Motor neuron (in vitro differentiated cells): ENCODE measurements at regions of chr2 and their contacts with region 1.

Region 1: DNA sequence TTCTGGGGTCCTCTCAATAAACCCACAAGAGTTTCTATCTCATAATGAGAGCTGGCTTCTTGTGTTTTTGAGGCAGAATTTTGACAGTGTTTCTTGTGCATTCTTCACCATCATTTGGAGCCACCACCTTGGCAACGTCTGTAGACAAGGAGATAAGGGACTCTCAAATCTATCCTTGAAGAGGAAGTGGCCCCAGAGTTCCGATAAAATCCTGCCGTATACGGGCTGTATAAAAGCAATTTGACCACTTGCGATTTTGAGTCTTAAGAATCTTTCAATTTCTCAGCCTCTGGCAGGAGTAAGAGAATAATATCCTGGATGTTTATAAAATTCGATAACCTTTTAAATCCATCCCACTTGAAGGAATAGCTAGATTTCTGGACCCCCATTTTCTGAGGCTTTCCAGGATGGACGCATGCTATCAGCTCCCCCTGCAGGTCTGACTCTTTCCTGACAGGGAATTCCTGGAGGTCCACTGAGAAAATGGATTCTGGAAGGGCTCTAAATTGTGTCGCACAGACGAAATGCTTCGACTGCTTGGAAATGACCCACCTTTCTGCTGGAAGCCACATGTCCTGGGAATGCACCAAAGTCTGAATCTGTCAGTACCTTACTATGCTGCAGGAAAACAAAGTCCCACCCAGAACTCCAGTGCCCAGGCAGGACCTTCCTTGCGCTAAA is 54.1 kb downstream of the E2F6 start:
- ATAC-seq: peak in 3 of 8 experiments; percentile 29 to 54 (median 43)
- H3K4me3 ChIP-seq: no peak overlapping the region
- H3K27ac ChIP-seq: no peak overlapping the region
- H3K4me1 ChIP-seq: peaks cover 0 to 7% of the 10 kb centered on the region in 2 donors

Region 2: DNA sequence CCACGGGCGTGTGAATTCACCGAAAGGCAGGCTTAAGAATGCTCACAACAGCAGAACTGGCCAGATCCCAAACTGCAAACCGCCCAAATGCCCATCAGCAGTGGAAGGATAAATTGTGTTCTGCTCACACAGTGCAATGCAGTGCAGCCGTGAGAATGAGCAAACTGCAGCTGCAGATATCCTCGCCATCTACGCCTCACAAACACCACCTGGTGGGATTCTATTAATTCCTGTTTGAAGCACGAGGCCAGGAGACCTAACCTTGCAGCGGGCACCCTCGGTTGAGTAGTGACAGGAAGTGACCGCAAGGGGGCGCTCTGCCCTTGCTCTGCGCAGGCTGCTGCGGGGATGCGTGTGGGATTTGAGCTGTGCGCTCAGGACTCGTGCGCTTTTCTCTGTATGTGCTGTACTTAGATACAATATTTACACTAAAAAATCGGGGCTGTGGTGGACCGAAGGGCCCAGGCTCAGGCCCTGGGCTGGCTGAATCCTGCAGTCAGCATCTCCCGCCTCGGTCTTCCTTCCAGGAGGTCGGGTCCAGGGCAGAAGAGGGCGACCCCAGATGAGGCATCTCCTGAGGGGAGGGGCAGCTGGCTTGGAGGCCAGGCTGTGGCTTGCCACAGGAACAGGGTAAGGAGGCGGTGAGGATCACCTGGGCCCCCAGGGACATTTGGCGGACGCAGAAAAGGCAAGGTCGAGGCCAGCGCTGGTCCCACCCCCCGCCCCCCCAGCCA is 579.5 kb before region 1 on chr2:
- in situ Hi-C with region 1: loop called in 1 of 9 experiments (anchors 25 kb)
- ATAC-seq: peak; percentile 89 to 95 (median 93)
- H3K4me3 ChIP-seq: peak overlapping the region in 2 of 5 donors; percentile 6 to 12
- H3K27ac ChIP-seq: no peak overlapping the region
- H3K4me1 ChIP-seq: peaks cover 19 to 26% of the 10 kb centered on the region in 2 donors

Region 3: GRCh38 chr2:11118761-11119160 is 293.1 kb before region 1 on chr2:
- in situ Hi-C with region 1: no loop called
- ATAC-seq: no peak
- H3K4me3 ChIP-seq: no peak overlapping the region
- H3K27ac ChIP-seq: no peak overlapping the region
- H3K4me1 ChIP-seq: no peaks in the 10 kb centered on the region

Region 4: DNA sequence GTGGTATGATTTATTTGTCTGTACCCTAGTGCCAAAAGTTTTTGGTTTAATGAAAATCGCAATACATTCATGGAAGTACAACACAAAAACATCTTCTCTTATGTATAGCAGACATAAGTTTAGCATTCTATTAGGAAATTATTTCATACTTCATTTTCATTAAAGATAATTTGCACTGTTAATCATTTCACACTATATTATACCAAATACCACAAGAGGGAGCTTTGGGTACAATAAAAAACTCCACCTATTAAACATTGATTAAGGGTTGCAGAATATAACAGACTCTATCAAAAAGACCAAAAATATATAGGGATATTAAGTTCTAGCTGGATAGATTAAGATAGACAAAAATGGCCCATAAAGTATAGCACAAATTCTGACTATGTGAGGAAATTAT is 177.6 kb before region 1 on chr2:
- in situ Hi-C with region 1: loop called in 2 of 9 experiments (anchors 25 kb)
- ATAC-seq: peak in 1 of 8 experiments; percentile 46
- H3K4me3 ChIP-seq: no peak overlapping the region
- H3K27ac ChIP-seq: no peak overlapping the region
- H3K4me1 ChIP-seq: no peaks in the 10 kb centered on the region

Region 5: GRCh38 chr2:11270891-11271290 is 141.0 kb before region 1 on chr2:
- in situ Hi-C with region 1: loop called in 1 of 9 experiments (anchors 25 kb)
- ATAC-seq: peak in 1 of 8 experiments; percentile 76
- H3K4me3 ChIP-seq: no peak overlapping the region
- H3K27ac ChIP-seq: no peak overlapping the region
- H3K4me1 ChIP-seq: no peaks in the 10 kb centered on the region